ENCODE measurements at regions of chr1 and their contacts with region 1.

Region 1: DNA sequence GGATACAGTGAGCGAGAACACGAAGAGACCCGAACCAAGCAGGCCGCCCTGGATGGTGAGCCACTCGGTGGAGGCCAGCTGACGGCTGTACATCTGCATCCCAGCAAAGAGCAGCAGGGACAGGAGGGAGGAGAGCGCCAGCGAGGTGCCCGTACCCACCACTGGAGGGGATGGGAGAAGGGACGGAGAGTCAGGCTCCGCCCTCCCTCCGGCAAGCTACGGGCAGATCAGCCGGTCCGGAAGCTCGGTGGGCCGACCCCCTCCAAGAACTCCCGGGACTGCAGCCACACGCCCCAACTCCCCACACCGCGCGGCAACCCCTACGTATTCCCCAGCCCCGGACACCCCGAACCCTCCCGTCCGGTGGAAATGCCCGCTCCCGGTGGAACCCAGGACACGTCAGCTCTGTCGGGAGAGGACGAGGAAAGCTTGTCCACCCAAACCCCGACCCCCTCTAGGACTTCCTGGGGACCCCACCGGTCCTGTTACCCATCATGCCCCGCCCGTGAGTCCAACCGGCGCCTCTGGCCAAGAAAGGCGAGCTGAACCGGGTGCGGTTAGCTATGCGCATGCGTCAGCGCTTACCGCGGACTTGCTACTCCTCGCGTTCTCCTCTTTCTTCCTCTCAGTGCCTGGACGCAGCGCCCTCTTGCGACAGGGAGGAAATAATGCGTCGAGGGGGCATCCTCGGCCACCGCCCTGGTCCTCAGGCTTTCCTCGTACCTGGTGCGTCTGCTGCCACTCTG is at the start of gene KRTCAP2:
- DNase-seq: peak; percentile 98
- H3K4me3 ChIP-seq: peak within 1 kb of the TSS; percentile 82
- H3K27ac ChIP-seq: peak within 1 kb of the TSS; percentile 64
- H3K4me1 ChIP-seq: peaks cover 37% of the 10 kb centered on the region
- CTCF ChIP-seq: peak; percentile 92
- total RNA-seq, gene KRTCAP2: 80.5 and 128 TPM in 2 replicates

Region 2: GRCh38 chr1:155091071-155091709 is 81.7 kb before region 1 on chr1:
- CTCF ChIA-PET with region 1: interaction called, 12 read pairs
- POLR2A ChIA-PET with region 1: interaction called, 6 read pairs
- intact Hi-C with region 1: no loop called
- DNase-seq: peak; percentile 80
- H3K4me3 ChIP-seq: no peak overlapping the region
- H3K27ac ChIP-seq: no peak overlapping the region
- H3K4me1 ChIP-seq: peaks cover 15% of the 10 kb centered on the region
- CTCF ChIP-seq: peak; percentile 97

Region 3: DNA sequence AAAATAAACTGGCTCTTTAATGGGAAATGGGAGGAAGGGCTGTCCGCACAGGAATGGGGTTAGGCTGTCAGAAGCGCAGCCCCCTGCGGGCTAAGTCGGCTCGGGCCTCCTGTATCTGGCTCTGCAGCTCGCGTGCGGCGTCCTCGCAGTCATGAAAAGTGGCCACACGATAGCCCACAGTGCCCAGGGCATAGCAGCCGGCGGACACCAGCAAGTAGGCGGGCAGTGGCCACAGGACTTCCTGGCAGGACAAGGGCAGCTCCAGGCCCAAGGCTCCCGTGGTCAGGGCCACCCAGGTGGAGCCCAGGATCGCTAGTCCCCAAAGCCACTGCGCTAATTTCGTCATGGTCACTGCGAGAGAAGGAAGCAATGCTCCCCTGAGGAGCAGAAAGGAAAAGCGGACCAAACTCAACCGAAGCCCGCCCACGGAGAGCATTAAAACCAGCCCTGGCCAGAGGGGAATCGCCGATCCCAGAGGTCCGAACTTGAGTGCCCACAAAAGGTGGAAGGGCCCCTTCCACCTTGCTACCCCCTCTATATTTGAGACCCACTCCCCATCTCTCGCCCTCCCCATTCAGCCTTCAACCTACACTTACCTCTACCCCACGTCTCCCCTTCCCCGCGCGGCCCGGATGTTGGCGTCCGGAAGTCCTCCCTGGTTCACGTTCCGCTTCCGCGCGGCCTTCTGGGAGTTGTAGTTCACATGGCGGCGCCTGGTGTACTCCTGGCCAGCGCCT is 32.8 kb before region 1 on chr1 and contains the start of gene DPM3:
- CTCF ChIA-PET with region 1: interaction called, 3 read pairs
- POLR2A ChIA-PET with region 1: interaction called, 6 read pairs
- intact Hi-C with region 1: loop called (anchors 2 kb)
- DNase-seq: peak; percentile 87
- H3K4me3 ChIP-seq: peak within 1 kb of the TSS; percentile 95
- H3K27ac ChIP-seq: peak within 1 kb of the TSS; percentile 39
- H3K4me1 ChIP-seq: peaks cover 17% of the 10 kb centered on the region
- CTCF ChIP-seq: no peak
- total RNA-seq, gene DPM3: 32.5 and 41.8 TPM in 2 replicates

Region 4: GRCh38 chr1:155193275-155193990 is 20.5 kb after region 1 on chr1:
- CTCF ChIA-PET with region 1: interaction called, 3 read pairs
- POLR2A ChIA-PET with region 1: interaction called, 4 read pairs
- intact Hi-C with region 1: loop called (anchors 1 kb)
- DNase-seq: peak; percentile 74
- H3K4me3 ChIP-seq: peak overlapping the region; percentile 29
- H3K27ac ChIP-seq: no peak overlapping the region
- H3K4me1 ChIP-seq: peaks cover 15% of the 10 kb centered on the region
- CTCF ChIP-seq: peak; percentile 96

Region 5: DNA sequence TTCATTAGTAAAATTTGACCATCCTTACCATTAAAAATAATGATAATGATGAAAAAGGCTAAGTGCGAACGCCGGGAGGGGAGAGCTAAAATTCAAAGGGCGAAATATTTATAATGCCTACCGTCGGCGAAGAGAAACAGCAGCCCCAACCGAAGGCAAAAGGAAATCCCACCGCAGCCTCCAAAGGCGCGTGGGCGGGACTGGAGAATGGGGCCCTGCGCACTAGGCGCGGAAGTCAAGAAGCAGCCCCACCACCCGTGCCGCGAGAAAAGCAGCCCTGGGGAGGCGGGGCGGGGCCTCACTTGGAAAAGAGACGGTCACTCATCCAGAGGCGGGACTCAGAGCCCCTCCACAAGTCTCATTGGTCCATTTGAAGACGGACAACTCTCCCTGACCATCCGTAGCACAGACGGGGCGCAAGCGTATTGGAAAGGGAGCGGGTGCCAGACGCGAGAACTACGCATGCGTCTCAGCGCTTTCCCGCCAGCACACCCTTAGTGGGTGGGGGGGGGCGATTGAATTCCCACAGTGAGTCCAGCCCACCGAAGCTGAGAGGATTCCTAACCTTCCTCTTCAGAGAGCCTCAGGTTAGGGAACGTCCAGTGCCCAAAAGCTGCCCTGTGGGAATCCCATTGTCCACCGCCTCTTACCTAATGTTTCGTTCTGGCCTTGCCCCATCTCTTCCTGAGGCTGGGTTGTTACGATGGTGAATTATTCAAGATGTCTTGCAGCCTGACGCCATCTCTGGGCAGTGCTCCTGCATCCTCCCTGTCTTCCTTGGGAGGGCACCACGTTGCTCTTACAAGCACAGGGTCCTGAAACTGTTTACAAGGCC is 54.6 kb after region 1 on chr1:
- CTCF ChIA-PET with region 1: no interaction called
- POLR2A ChIA-PET with region 1: interaction called, 7 read pairs
- intact Hi-C with region 1: loop called (anchors 1 kb)
- DNase-seq: peak; percentile 100
- H3K4me3 ChIP-seq: peak overlapping the region; percentile 83
- H3K27ac ChIP-seq: peak overlapping the region; percentile 89
- H3K4me1 ChIP-seq: peaks cover 50% of the 10 kb centered on the region
- CTCF ChIP-seq: no peak

Region 6: DNA sequence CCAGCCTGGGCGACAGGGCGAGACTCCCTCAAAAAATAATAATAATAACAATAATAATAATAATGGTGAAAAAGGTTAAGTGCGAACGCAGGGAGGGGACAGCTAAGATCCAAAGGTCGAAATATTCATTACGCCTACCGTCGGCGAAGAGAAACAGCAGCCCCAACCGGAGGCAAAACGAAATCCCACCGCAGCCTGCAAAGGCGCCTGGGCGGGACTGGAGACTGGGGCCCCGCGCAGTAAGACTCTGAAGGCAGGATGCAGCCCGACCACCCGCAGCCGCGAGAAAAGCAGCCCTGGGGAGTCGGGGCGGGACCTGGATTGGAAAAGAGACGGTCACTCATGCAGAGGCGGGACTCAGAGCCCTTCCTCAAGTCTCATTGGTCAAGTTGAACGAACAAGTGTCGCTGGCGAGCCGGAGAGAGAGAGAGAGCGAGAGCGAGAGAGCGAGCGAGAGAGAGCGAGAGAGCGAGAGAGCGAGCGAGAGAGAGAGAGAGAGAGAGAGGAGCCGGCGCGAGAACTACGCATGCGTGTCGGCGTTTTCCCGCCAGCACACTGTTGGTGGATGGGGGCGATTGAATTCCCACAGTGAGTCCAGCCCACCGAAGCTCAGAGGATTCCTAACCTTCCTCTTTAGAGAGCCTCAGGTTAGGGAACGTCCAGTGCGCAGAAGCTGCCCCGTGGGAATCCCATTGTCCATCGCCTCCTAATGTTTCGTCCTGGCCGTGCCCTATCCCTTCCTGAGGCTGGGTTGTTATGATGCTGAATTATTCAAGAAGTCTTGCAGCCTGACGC is 71.7 kb after region 1 on chr1:
- CTCF ChIA-PET with region 1: no interaction called
- POLR2A ChIA-PET with region 1: interaction called, 3 read pairs
- intact Hi-C with region 1: loop called (anchors 1 kb)
- DNase-seq: peak; percentile 100
- H3K4me3 ChIP-seq: peak overlapping the region; percentile 81
- H3K27ac ChIP-seq: peak overlapping the region; percentile 82
- H3K4me1 ChIP-seq: peaks cover 38% of the 10 kb centered on the region
- CTCF ChIP-seq: peak; percentile 63

Region 7: GRCh38 chr1:155323798-155324610 is 151.1 kb after region 1 on chr1:
- CTCF ChIA-PET with region 1: interaction called, 3 read pairs
- POLR2A ChIA-PET with region 1: no interaction called
- intact Hi-C with region 1: loop called (anchors 5 kb)
- DNase-seq: peak; percentile 83
- H3K4me3 ChIP-seq: peak overlapping the region; percentile 78
- H3K27ac ChIP-seq: peak overlapping the region; percentile 53
- H3K4me1 ChIP-seq: peaks cover 23% of the 10 kb centered on the region
- CTCF ChIP-seq: no peak